ENCODE measurements at regions of chr22 and their contacts with region 1.

Region 1: DNA sequence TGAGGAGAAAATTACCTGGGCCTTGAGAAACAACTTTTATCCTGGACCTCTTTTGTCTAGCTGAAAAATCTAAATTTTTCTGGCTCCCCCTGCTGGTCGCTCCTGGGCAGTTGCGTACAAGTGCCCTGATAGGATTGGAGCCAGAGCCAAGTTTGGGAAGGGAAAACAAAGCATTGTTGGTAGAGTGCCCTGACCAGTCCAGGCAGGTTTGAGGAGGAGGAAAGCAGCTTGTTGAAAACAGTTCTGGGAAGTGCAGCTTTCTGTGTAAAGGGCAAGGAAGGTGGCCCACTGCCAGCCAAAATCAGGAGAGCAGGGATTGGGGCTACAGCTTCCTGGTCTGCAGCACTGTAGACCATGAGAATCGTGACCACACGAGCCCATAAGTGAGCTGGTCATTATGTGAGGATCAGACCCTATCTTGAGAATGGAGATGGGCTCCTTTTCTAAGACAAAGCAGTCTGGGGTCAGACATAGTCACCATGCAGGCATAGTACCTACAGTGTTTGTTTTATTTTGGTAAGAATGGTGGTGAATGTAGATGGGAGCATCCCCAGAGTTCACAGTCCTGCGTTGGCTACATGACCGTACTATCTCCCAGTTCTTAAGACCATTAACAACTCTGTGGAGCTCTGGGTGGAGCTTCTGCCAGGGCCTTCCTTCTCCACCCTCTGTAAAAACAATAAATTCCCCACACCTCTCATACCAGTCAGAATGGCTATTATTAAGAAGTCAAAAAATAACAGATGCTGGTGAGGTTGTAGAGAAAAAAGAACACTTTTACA is 21.3 kb upstream of the PIK3IP1 start:
- DNase-seq: peak; percentile 48 to 79
- ATAC-seq: peak in 2 of 3 donors; percentile 63 to 66
- H3K4me3 ChIP-seq: no peak overlapping the region
- H3K4me3 Mint-ChIP-seq: no peak overlapping the region
- H3K27ac ChIP-seq: no peak overlapping the region
- H3K27ac Mint-ChIP-seq: peak overlapping the region in 1 of 2 donors; percentile 48
- H3K4me1 ChIP-seq: peaks cover 3% of the 10 kb centered on the region
- H3K4me1 Mint-ChIP-seq: peaks cover 0 to 4% of the 10 kb centered on the region in 2 donors
- H3K27me3 ChIP-seq: no peaks in the 10 kb centered on the region
- H3K27me3 Mint-ChIP-seq: no peaks in the 10 kb centered on the region
- CTCF ChIP-seq: peak; percentile 93

Region 2: DNA sequence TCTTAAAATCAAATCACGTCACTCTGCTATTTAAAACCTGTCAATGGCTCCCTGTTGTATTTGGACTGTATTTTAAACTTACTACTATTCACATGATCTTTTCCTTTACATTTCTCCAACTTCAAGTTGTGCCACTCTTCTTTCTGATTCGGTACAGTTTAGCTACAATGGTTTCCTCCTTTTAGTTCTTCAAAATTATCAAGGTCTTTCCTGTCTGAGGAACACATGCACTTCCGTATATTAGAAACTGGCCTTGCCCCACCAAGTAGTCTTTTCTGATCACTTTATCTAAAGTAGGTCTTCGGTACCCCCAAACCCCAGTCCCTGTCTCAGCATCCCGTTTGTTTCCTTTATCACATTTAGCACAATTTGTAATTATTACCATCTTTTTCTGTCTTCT is 1348.8 kb before region 1 on chr22:
- intact Hi-C with region 1: no loop called
- DNase-seq: no peak
- ATAC-seq: no peak
- H3K4me3 ChIP-seq: no peak overlapping the region
- H3K4me3 Mint-ChIP-seq: no peak overlapping the region
- H3K27ac ChIP-seq: no peak overlapping the region
- H3K27ac Mint-ChIP-seq: peak overlapping the region in 1 of 2 donors; percentile 3
- H3K4me1 ChIP-seq: no peaks in the 10 kb centered on the region
- H3K4me1 Mint-ChIP-seq: peaks cover 22 to 41% of the 10 kb centered on the region in 2 donors
- H3K27me3 ChIP-seq: no peaks in the 10 kb centered on the region
- H3K27me3 Mint-ChIP-seq: no peaks in the 10 kb centered on the region
- CTCF ChIP-seq: no peak

Region 3: DNA sequence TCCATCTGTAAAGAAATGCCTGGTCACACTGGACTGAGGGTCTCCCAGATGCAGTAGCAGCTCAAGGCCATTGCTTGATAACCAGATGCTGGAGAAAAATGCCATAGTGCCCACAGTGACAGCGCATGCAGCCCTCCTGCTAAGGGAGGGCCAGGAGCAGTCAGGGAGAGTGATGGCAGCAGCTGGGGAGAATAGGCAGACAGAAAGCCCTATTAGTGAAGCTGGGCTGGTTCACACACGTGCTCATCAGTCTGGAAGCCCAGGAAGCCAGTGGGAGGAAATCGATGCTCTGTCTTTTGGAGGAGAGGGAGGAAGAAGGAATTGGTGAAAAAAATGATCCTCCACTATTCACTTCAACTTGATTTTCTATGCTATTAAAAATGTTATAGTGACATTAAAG is 536.0 kb before region 1 on chr22:
- intact Hi-C with region 1: no loop called
- DNase-seq: no peak
- ATAC-seq: no peak
- H3K4me3 ChIP-seq: no peak overlapping the region
- H3K4me3 Mint-ChIP-seq: no peak overlapping the region
- H3K27ac ChIP-seq: no peak overlapping the region
- H3K27ac Mint-ChIP-seq: no peak overlapping the region
- H3K4me1 ChIP-seq: no peaks in the 10 kb centered on the region
- H3K4me1 Mint-ChIP-seq: no peaks in the 10 kb centered on the region
- H3K27me3 ChIP-seq: no peaks in the 10 kb centered on the region
- H3K27me3 Mint-ChIP-seq: peaks cover 0 to 7% of the 10 kb centered on the region in 2 donors
- CTCF ChIP-seq: no peak

Region 4: DNA sequence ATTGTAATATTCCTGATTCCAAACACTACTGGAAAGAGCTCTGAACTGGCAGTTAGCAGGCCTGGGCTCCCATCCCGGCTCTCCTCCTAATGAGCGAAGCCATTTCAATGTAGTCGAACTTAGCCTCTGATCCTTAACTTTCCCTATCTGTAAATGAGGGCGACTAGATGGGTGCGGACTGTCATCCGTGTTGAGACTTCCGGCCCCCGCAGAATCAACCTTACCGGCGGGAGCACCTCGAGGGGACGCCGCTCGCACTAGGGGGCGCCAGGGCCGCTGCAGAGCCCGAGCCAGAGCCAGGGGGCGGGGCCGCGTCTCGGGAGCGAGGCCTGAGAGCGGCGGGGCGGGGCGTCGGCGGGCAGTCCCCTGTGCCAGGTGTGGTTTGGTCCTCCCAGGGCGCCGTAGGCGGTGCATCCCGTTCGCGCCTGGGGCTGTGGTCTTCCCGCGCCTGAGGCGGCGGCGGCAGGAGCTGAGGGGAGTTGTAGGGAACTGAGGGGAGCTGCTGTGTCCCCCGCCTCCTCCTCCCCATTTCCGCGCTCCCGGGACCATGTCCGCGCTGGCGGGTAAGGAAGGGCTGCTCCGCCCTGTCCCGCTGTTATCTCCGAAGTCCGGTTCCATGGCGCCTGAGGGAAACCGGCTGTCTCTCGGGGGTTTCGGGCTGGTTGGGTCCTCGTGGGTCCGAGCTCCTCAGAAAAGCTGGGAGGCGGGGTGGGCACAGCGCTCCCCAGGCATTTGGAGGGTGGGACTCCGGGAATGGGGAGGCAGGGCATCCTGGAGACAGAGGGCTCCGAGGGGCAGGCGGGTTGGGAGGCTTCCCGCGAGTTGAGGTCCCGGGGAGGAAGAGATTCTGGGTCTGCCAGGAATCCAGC is 101.5 kb before region 1 on chr22 and contains the start of gene LIMK2:
- intact Hi-C with region 1: loop called (anchors 5 kb)
- DNase-seq: peak; percentile 97 to 98
- ATAC-seq: peak; percentile 98 to 100 (median 99)
- H3K4me3 ChIP-seq: peak within 1 kb of the TSS; percentile 95
- H3K4me3 Mint-ChIP-seq: peak within 1 kb of the TSS; percentile 88
- H3K27ac ChIP-seq: peak within 1 kb of the TSS; percentile 61
- H3K27ac Mint-ChIP-seq: peak within 1 kb of the TSS; percentile 69 to 92
- H3K4me1 ChIP-seq: peaks cover 33% of the 10 kb centered on the region
- H3K4me1 Mint-ChIP-seq: peaks cover 33 to 47% of the 10 kb centered on the region in 2 donors
- H3K27me3 ChIP-seq: no peaks in the 10 kb centered on the region
- H3K27me3 Mint-ChIP-seq: no peaks in the 10 kb centered on the region
- CTCF ChIP-seq: peak; percentile 77
- total RNA-seq, gene LIMK2: 17.2 to 28.6 (median 19.1) TPM

Measured in natural killer cell (primary cell).